ENCODE measurements at regions of chr5 and their contacts with region 1.

Region 1: GRCh38 chr5:39080597-39081204 is 6.5 kb upstream of the RICTOR start:
- DNase-seq: no peak
- H3K4me3 ChIP-seq: no peak overlapping the region
- H3K27ac ChIP-seq: no peak overlapping the region
- H3K4me1 ChIP-seq: peaks cover 0 to 5% of the 10 kb centered on the region in 2 donors
- H3K27me3 ChIP-seq: no peaks in the 10 kb centered on the region
- CTCF ChIP-seq: peak; percentile 72 to 83 (median 77)

Region 2: DNA sequence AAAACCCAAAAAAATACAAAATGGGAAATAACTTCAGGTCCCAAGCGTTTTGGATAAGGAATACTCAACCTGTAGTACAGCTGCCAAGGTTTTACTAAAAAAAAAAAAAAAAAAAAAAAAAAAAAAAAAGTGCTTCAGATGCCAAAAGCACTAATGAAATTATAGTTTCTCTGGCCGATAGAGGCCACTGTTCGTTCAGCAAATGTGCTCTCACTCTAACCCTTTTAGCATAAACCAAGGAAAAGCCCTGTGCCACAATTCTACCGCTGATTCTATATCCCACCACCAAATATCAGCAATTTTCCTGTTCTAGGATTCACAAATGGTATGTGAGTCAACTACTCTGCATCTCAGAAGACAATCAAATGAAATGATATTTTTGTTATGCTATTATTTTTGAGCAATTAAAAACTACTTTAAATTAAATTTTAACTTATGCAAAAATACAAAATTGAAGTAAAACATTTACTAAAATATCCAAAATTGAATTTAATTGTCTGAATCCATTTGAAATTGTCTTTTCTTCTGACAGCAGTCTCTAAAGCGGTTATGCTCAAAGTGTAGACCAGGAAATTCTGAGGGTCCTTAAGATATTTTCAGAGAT is 86.3 kb before region 1 on chr5:
- intact Hi-C with region 1: loop called (anchors 1 kb)
- DNase-seq: no peak
- H3K4me3 ChIP-seq: no peak overlapping the region
- H3K27ac ChIP-seq: no peak overlapping the region
- H3K4me1 ChIP-seq: no peaks in the 10 kb centered on the region
- H3K27me3 ChIP-seq: no peaks in the 10 kb centered on the region
- CTCF ChIP-seq: peak in 2 of 3 experiments; percentile 35 to 59

Region 3: GRCh38 chr5:39005566-39006232 is 75.0 kb before region 1 on chr5:
- intact Hi-C with region 1: loop called (anchors 5 kb)
- DNase-seq: no peak
- H3K4me3 ChIP-seq: no peak overlapping the region
- H3K27ac ChIP-seq: no peak overlapping the region
- H3K4me1 ChIP-seq: no peaks in the 10 kb centered on the region
- H3K27me3 ChIP-seq: no peaks in the 10 kb centered on the region
- CTCF ChIP-seq: peak in 2 of 3 experiments; percentile 21 to 49

Measured in ascending aorta (tissue), 2 donors.